ENCODE measurements at regions of chr10 and their contacts with region 1.

Region 1: DNA sequence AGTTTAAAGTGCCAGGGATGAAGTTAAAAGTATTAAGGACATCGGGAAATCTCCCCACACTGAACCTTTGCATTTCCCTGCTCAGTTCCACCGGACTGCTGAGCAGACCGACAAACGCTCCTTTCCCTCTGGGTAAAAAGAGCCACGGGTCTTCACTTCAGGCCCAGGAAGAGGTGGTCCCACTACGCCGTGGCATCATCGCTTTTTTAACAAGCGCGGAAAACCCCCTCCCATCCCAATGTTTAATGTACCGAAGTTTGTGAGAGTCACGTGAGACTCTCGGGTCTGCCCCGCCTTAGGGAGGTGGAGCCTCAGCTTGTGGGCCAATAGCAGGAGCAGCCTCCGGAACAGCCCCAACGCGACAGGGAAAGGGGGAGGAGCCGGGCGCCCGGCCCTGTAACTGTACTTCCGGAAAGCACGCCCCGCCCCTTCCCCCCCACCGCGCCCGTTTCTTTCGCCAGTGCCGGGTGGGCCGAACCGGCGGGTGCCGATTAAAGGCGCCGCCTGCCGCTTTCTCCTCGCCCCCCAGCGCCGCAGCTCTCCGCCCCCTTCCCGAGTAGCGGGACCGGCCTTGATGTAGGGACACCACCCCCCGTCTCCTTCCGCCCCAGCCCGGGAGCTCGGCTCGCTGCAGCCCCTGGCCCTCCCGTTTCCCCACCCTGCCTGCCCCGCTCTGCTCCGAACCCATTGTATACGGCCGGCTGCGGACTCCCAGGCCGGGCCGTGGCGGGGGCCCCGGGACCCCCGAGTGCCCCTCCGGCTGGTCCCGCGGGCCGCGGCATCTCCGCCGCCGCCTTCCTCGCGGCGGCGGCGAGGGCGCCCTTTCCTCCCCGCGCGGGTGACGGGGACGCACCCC is 2.2 kb upstream of the TRIM8 start:
- DNase-seq: peak; percentile 98
- H3K4me3 ChIP-seq: peak overlapping the region; percentile 56 to 86 (median 69)
- H3K27ac ChIP-seq: peak overlapping the region; percentile 86
- H3K4me1 ChIP-seq: peaks cover 12% of the 10 kb centered on the region
- H3K27me3 ChIP-seq: no peaks in the 10 kb centered on the region
- CTCF ChIP-seq: no peak
- POLR2A ChIP-seq: peak; percentile 73

Region 2: DNA sequence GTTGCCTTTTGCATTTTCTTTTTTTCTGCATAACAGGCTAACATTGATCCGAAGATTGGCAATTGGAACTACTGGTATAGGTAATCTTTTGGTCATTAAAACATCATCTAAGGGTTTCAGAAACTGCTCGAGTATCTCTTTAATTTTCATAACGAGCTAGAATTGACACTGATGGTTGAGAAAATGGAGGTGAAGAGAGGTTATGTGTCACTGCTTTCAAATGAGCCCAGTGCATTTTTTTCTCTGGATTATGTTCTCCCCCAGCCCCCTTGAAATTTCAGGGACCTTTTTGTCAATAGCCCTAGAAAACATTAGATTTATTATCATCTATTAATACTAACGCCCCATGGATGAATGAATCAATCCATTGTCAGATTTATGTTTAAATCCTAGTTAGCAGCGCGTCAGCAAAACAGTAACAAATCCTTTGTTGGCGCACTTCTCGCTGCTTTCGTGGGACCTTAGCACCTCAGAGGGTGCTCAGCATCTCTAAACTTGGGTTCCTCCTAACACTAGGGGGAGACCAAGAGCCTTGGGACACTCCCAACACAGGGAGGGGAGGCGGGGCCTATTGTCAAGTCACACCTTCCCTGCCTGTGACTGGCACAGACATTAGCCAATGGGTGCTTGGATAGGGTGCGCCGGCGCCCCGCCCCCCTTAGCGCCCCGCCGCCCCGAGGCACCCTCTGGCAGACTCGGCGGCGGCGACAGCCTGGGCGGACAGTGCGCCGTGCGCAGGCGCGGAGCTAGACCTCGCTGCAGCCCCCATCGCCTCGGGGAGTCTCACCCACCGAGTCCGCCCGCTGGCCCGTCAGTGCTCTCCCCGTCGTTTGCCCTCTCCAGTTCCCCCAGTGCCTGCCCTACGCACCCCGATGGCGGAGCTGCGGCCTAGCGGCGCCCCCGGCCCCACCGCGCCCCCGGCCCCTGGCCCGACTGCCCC is 138.6 kb before region 1 on chr10 and contains the start of gene SUFU:
- CTCF ChIA-PET with region 1: interaction called, 18 read pairs
- POLR2A ChIA-PET with region 1: interaction called, 4 read pairs
- dilution Hi-C with region 1: no loop called
- intact Hi-C with region 1: loop called (anchors 1 kb)
- DNase-seq: peak; percentile 99
- H3K4me3 ChIP-seq: peak within 1 kb of the TSS; percentile 68 to 87 (median 76)
- H3K27ac ChIP-seq: peak within 1 kb of the TSS; percentile 52
- H3K4me1 ChIP-seq: peaks cover 16% of the 10 kb centered on the region
- H3K27me3 ChIP-seq: no peaks in the 10 kb centered on the region
- CTCF ChIP-seq: peak; percentile 89 to 91
- POLR2A ChIP-seq: peak; percentile 86
- total RNA-seq, gene SUFU: 14.5 and 16.3 TPM in 2 replicates

Region 3: DNA sequence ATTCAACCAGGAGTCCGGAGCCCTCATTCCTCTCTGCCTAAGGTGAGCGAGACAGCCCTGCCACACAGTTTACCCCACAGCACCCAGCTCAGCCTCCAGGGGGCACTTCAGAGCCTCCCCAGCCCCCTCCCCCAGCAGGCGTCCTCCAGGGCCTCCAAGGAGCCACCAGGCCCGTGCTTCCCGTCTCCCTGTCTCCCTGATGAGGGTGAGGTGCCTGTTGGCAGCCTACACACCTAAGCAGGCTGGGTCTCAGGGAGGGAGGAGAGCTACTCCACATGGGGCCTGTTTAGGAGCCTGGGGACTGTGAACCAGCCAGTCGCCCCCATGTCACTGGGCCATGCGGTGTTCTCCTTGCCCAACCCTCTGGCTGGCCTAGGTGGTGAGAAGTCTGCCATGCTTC is 26.7 kb before region 1 on chr10:
- CTCF ChIA-PET with region 1: interaction called, 16 read pairs
- POLR2A ChIA-PET with region 1: no interaction called
- dilution Hi-C with region 1: no loop called
- intact Hi-C with region 1: loop called (anchors 1 kb)
- DNase-seq: peak; percentile 29
- H3K4me3 ChIP-seq: no peak overlapping the region
- H3K27ac ChIP-seq: no peak overlapping the region
- H3K4me1 ChIP-seq: peaks cover 52% of the 10 kb centered on the region
- H3K27me3 ChIP-seq: no peaks in the 10 kb centered on the region
- CTCF ChIP-seq: peak; percentile 32 to 65
- POLR2A ChIP-seq: no peak

Region 4: GRCh38 chr10:102629661-102630614 is 12.2 kb before region 1 on chr10:
- CTCF ChIA-PET with region 1: interaction called, 14 read pairs
- POLR2A ChIA-PET with region 1: interaction called, 7 read pairs
- dilution Hi-C with region 1: no loop called
- intact Hi-C with region 1: loop called (anchors 1 kb)
- DNase-seq: peak; percentile 50
- H3K4me3 ChIP-seq: no peak overlapping the region
- H3K27ac ChIP-seq: peak overlapping the region; percentile 97
- H3K4me1 ChIP-seq: peaks cover 73% of the 10 kb centered on the region
- H3K27me3 ChIP-seq: no peaks in the 10 kb centered on the region
- CTCF ChIP-seq: no peak
- POLR2A ChIP-seq: peak; percentile 47

Region 5: DNA sequence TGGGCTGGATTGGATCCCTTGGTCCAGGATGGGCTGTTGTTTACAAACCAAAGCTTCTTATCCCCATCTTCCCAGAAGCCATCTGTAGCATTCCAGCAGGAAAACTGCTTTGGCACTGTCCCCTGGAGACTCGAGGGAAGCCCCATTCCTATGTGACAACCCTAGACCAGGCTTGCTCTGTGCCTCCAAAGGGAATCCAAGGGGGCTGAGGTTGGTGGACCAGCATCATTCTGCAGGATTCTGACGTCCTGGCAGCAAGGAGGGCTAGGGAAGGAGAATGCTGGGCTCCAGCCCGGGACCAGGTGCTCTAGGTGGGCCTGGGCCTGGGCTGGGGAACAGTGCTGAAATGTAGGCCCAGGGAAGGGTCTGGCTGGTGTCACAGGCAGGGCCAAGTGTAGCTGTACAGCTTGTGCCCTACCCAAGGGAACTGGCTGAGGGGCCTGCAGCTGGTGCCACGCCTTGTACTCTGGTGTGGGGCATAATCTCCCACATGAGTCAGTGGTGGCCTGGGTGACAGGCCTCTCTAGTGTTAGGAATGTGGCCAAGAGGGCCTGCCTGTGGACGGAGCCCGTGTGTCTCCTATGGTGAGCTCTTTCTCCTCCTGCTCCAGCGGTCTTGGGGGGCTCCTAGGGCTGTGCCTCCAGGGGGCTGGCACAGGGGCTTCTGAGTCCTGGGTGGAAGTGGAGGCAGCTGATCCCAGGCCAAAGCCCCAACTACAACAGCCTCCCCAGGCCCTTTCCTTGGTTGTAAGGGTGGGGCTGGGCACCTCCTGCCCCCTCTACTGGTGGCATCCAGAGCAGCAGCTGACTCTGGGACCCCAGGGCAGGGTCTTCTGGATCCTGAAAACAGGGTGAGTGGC is 27.3 kb after region 1 on chr10:
- CTCF ChIA-PET with region 1: interaction called, 17 read pairs
- POLR2A ChIA-PET with region 1: no interaction called
- dilution Hi-C with region 1: no loop called
- intact Hi-C with region 1: no loop called
- DNase-seq: no peak
- H3K4me3 ChIP-seq: no peak overlapping the region
- H3K27ac ChIP-seq: no peak overlapping the region
- H3K4me1 ChIP-seq: peaks cover 5% of the 10 kb centered on the region
- H3K27me3 ChIP-seq: no peaks in the 10 kb centered on the region
- CTCF ChIP-seq: peak; percentile 17 to 51
- POLR2A ChIP-seq: no peak

Region 6: GRCh38 chr10:102713814-102714620 is 71.9 kb after region 1 on chr10 and contains the start of gene ARL3:
- CTCF ChIA-PET with region 1: interaction called, 3 read pairs
- POLR2A ChIA-PET with region 1: no interaction called
- dilution Hi-C with region 1: no loop called
- intact Hi-C with region 1: loop called (anchors 1 kb)
- DNase-seq: peak; percentile 99
- H3K4me3 ChIP-seq: peak within 1 kb of the TSS; percentile 64 to 85 (median 85)
- H3K27ac ChIP-seq: peak within 1 kb of the TSS; percentile 38
- H3K4me1 ChIP-seq: peaks cover 23% of the 10 kb centered on the region
- H3K27me3 ChIP-seq: no peaks in the 10 kb centered on the region
- CTCF ChIP-seq: peak; percentile 39 to 78
- POLR2A ChIP-seq: peak; percentile 76
- total RNA-seq, gene ARL3: 10.6 and 11.0 TPM in 2 replicates

Region 7: DNA sequence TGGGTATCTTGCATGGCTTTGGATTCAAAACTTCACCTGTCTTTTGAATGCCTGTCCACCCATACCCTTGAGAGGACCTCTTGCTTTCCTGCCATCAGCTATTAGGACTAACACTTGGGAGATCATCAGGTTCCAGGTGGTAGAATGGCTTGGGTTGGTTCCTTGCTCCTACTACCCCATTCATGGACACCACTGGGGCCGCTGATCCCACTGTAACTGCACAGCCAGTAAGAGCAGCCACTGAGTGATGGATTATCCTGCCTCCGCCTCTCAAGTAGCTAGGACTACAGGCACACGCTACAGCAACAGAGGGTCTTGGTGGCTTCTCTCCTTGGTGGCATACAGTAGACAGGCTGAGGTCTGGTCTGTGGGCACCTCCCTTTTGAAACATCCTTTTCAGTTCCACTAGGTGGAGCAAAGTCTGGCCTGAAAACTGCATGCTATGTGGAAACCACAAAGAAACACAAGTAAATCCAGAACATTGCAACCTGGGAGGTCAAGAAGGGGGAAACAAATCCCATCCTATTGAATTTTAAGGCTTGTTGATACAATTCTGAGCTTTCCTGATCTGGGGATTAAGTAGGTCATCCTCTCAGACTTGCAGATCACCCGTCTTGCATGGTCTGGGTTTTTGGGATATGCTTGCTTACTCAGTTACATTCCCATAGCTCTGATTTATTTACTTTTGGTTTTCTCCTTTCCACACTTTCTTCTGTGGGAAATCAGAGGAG is 111.0 kb after region 1 on chr10:
- CTCF ChIA-PET with region 1: no interaction called
- POLR2A ChIA-PET with region 1: no interaction called
- dilution Hi-C with region 1: no loop called
- intact Hi-C with region 1: no loop called
- DNase-seq: peak; percentile 87
- H3K4me3 ChIP-seq: no peak overlapping the region
- H3K27ac ChIP-seq: peak overlapping the region; percentile 24
- H3K4me1 ChIP-seq: peaks cover 7% of the 10 kb centered on the region
- H3K27me3 ChIP-seq: no peaks in the 10 kb centered on the region
- CTCF ChIP-seq: peak; percentile 65 to 70
- POLR2A ChIP-seq: no peak

Region 8: DNA sequence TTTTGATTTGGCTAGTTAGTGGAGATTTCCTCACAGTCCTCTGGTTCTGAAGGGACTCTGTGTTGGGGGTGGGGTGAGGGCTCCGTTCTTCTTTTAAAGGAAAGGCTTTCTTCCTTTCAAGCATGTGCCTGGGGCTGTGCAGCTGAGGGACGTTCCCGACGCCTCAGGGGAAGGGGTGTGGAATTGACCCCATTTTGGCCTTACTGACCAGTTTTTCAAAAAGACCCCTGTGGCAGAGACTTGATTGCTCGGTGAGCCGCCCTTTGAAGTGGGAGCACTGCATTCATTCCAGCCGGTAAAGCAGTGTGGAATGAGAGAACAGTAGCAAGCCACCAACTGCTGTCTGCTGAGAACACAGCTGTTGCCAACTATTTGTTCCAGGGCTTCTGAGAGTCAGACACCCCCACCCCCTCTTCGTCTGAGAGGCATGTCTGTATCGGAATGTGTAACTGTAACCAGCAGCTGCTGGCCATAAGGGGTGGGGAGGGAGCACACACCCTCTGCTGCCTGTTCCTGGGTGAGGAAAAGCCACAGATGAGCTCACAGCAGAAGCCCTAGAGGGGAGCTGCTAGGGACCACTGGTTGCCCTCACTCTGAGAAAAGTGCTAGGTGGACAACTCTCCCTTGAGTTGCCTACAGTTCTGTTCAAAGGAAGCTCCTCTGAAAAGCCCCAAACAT is 134.8 kb after region 1 on chr10:
- CTCF ChIA-PET with region 1: no interaction called
- POLR2A ChIA-PET with region 1: no interaction called
- dilution Hi-C with region 1: no loop called
- intact Hi-C with region 1: no loop called
- DNase-seq: peak; percentile 92
- H3K4me3 ChIP-seq: peak overlapping the region; percentile 0 to 76 (median 54)
- H3K27ac ChIP-seq: peak overlapping the region; percentile 98
- H3K4me1 ChIP-seq: peaks cover 67% of the 10 kb centered on the region
- H3K27me3 ChIP-seq: no peaks in the 10 kb centered on the region
- CTCF ChIP-seq: no peak
- POLR2A ChIP-seq: peak; percentile 62